ENCODE measurements at regions of chr11 and their contacts with region 1.

Region 1: DNA sequence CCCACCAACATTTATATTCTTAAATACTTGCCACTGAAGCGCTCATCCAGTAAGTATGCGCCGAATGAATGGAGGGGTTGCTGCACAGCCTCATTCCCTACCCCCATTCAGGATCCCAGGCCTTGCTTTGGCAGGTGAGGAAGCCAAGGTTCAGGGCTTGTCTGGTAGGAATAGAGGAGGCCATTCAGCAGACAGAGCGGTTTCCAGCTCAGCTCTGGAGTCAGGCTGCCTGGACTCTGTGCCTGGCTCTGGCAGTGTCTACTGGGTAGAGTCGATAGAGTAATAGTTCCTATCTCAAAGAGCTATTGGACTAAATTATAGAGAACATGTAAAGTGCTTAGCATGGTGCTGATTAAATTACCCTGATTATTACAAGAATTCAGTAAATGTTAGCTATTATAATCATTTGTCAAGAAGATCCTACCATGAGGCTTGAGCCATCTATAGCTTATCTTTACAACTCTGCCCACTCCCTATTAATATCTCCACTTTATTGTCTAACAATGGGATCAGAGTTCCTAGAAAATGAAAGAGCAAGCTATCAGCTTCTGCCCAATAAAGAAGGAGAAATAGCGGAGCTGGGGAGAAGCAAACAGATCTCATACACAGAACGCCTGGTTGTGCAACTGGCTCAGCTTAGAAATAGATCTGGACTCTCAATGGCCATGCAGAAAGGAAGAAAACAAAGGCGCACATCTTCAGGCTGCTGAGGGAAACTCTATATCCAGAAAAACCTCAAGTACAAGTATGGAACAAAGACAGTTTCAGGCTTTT is 6.6 kb upstream of the SNX32 start:
- DNase-seq: no peak
- ATAC-seq: no peak
- H3K4me3 ChIP-seq: no peak overlapping the region
- H3K27ac ChIP-seq: no peak overlapping the region
- H3K4me1 ChIP-seq: no peaks in the 10 kb centered on the region
- H3K27me3 ChIP-seq: peaks cover 6% of the 10 kb centered on the region; the same call in 1 of the 2 replicates
- CTCF ChIP-seq: no peak

Region 2: DNA sequence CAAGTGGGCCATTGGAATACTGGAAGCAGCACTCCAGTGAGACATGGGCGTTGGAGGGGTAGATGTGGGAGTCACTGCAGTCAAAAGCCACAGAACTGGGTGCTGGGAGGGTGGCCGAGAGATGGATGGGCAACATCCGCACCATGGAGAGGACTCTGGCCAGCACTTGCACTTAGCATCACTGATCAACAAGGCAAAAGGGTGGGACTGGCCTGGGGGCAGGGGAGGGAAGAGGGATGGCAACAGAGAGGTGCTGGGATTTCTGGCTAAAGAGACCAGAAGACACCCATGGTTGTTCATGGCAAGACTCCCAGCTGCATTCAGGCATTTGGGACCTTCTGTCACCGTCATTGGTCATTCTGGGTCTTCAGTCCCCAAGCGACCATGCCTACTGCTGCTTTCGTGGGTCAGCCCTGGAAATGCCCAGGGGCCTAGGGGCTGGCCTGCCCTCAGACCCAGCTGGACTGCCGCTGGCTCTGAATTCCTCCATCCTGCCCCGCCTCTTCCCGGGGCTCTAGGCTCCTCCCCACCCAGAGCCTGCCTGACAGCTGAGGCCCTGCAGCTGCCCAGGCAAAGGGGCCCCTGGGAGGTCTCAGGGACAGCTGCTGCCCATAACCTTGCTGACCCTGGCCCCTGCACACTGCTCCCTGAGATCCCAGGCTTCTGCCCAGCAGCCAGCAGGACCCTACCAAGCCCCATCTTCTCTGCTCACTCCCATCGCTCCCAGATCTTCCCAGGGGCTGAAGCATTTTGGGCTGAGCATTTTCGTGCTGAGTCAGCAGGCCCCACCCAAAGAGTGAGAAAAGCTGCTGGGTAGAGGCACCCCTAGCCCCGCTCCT is 525.4 kb before region 1 on chr11:
- CTCF ChIA-PET with region 1: no interaction called
- POLR2A ChIA-PET with region 1: interaction called, 12 read pairs
- in situ Hi-C with region 1: no loop called
- intact Hi-C with region 1: no loop called
- DNase-seq: no peak
- ATAC-seq: peak; percentile 34; the same call in 1 of the 2 replicates
- H3K4me3 ChIP-seq: no peak overlapping the region
- H3K27ac ChIP-seq: no peak overlapping the region
- H3K4me1 ChIP-seq: no peaks in the 10 kb centered on the region
- H3K27me3 ChIP-seq: no peaks in the 10 kb centered on the region
- CTCF ChIP-seq: no peak

Region 3: GRCh38 chr11:65850831-65851811 is 24.0 kb after region 1 on chr11:
- CTCF ChIA-PET with region 1: no interaction called
- POLR2A ChIA-PET with region 1: interaction called, 13 read pairs
- in situ Hi-C with region 1: no loop called
- intact Hi-C with region 1: no loop called
- DNase-seq: no peak
- ATAC-seq: peak; percentile 59
- H3K4me3 ChIP-seq: no peak overlapping the region
- H3K27ac ChIP-seq: no peak overlapping the region
- H3K4me1 ChIP-seq: peaks cover 33% of the 10 kb centered on the region
- H3K27me3 ChIP-seq: no peaks in the 10 kb centered on the region
- CTCF ChIP-seq: peak; percentile 91

Region 4: GRCh38 chr11:65932558-65932919 is 105.4 kb after region 1 on chr11:
- CTCF ChIA-PET with region 1: no interaction called
- POLR2A ChIA-PET with region 1: no interaction called
- in situ Hi-C with region 1: no loop called
- intact Hi-C with region 1: no loop called
- DNase-seq: no peak
- ATAC-seq: peak; percentile 47
- H3K4me3 ChIP-seq: no peak overlapping the region
- H3K27ac ChIP-seq: no peak overlapping the region
- H3K4me1 ChIP-seq: peaks cover 10% of the 10 kb centered on the region
- H3K27me3 ChIP-seq: no peaks in the 10 kb centered on the region
- CTCF ChIP-seq: no peak

Measured in Panc1 (cell line).